CD4-positive, alpha-beta T cell (primary cell): ENCODE measurements at regions of chr6 and their contacts with region 1.

Region 1: GRCh38 chr6:159789377-159790148 is at the start of gene TCP1:
- DNase-seq: peak; percentile 95 to 100 (median 99)
- ATAC-seq: peak; percentile 83
- H3K4me3 ChIP-seq: peak within 1 kb of the TSS; percentile 84
- H3K4me3 Mint-ChIP-seq: peak within 1 kb of the TSS; percentile 99
- H3K27ac ChIP-seq: peak within 1 kb of the TSS; percentile 88 to 97
- H3K27ac Mint-ChIP-seq: peak within 1 kb of the TSS; percentile 95
- H3K4me1 ChIP-seq: peaks cover 37% of the 10 kb centered on the region
- H3K4me1 Mint-ChIP-seq: peaks cover 73% of the 10 kb centered on the region
- H3K27me3 ChIP-seq: no peaks in the 10 kb centered on the region
- H3K27me3 Mint-ChIP-seq: no peaks in the 10 kb centered on the region
- CTCF ChIP-seq: no peak
- total RNA-seq, gene TCP1: 212 to 216 TPM

Region 2: GRCh38 chr6:159726918-159727716 is 62.4 kb before region 1 on chr6 and contains the start of gene WTAP:
- CTCF ChIA-PET with region 1: interaction called, 4 read pairs
- POLR2A ChIA-PET with region 1: interaction called, 176 read pairs
- intact Hi-C with region 1: loop called (anchors 1 kb)
- DNase-seq: peak; percentile 94 to 99 (median 96)
- ATAC-seq: peak; percentile 86
- H3K4me3 ChIP-seq: peak within 1 kb of the TSS; percentile 82
- H3K4me3 Mint-ChIP-seq: peak within 1 kb of the TSS; percentile 99
- H3K27ac ChIP-seq: peak within 1 kb of the TSS; percentile 95 to 98
- H3K27ac Mint-ChIP-seq: peak within 1 kb of the TSS; percentile 100
- H3K4me1 ChIP-seq: peaks cover 25% of the 10 kb centered on the region
- H3K4me1 Mint-ChIP-seq: peaks cover 80% of the 10 kb centered on the region
- H3K27me3 ChIP-seq: no peaks in the 10 kb centered on the region
- H3K27me3 Mint-ChIP-seq: peaks cover 9% of the 10 kb centered on the region
- CTCF ChIP-seq: no peak
- total RNA-seq, gene WTAP: 211 to 227 TPM

Region 3: GRCh38 chr6:159819932-159820640 is 30.5 kb after region 1 on chr6:
- CTCF ChIA-PET with region 1: no interaction called
- POLR2A ChIA-PET with region 1: interaction called, 37 read pairs
- intact Hi-C with region 1: no loop called
- DNase-seq: peak in 12 of 14 experiments; percentile 5 to 64 (median 36)
- ATAC-seq: peak; percentile 85
- H3K4me3 ChIP-seq: peak overlapping the region; percentile 47
- H3K4me3 Mint-ChIP-seq: peak overlapping the region; percentile 83
- H3K27ac ChIP-seq: peak overlapping the region; percentile 33 to 53
- H3K27ac Mint-ChIP-seq: peak overlapping the region; percentile 81
- H3K4me1 ChIP-seq: peaks cover 24% of the 10 kb centered on the region
- H3K4me1 Mint-ChIP-seq: peaks cover 30% of the 10 kb centered on the region
- H3K27me3 ChIP-seq: no peaks in the 10 kb centered on the region
- H3K27me3 Mint-ChIP-seq: no peaks in the 10 kb centered on the region
- CTCF ChIP-seq: no peak

Region 4: DNA sequence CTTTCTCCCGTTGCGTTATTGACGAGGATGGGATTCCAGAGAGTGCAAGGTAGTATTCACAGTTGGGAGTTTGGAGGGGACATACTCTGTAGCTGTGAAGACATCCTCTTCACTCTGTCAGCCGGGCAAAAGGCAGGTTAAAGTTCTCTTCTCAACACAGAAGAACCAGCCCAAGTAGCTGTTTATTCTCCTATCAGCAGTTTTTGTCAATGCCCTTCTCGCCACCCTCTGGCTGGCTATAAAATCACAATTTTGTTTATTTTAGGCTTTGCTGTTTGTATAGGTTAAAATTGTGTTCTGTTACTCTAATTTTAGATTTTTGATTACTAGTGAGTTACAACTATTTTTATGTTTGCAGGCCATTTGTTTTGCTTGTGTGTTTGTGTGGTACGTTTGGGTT is 63.3 kb after region 1 on chr6:
- CTCF ChIA-PET with region 1: no interaction called
- POLR2A ChIA-PET with region 1: interaction called, 18 read pairs
- intact Hi-C with region 1: loop called (anchors 5 kb)
- DNase-seq: peak in 7 of 14 experiments; percentile 4 to 53 (median 37)
- ATAC-seq: peak; percentile 67
- H3K4me3 ChIP-seq: no peak overlapping the region
- H3K4me3 Mint-ChIP-seq: no peak overlapping the region
- H3K27ac ChIP-seq: no peak overlapping the region
- H3K27ac Mint-ChIP-seq: no peak overlapping the region
- H3K4me1 ChIP-seq: no peaks in the 10 kb centered on the region
- H3K4me1 Mint-ChIP-seq: peaks cover 4% of the 10 kb centered on the region
- H3K27me3 ChIP-seq: no peaks in the 10 kb centered on the region
- H3K27me3 Mint-ChIP-seq: no peaks in the 10 kb centered on the region
- CTCF ChIP-seq: peak; percentile 43

Region 5: GRCh38 chr6:159968440-159969203 is 179.1 kb after region 1 on chr6 and contains the start of gene IGF2R:
- CTCF ChIA-PET with region 1: no interaction called
- POLR2A ChIA-PET with region 1: interaction called, 10 read pairs
- intact Hi-C with region 1: loop called in 1 of 2 experiments (anchors 2 kb)
- DNase-seq: peak; percentile 86 to 97 (median 94)
- ATAC-seq: peak; percentile 89
- H3K4me3 ChIP-seq: peak within 1 kb of the TSS; percentile 76
- H3K4me3 Mint-ChIP-seq: peak within 1 kb of the TSS; percentile 98
- H3K27ac ChIP-seq: peak within 1 kb of the TSS; percentile 31 to 42
- H3K27ac Mint-ChIP-seq: peak within 1 kb of the TSS; percentile 91
- H3K4me1 ChIP-seq: peaks cover 41% of the 10 kb centered on the region
- H3K4me1 Mint-ChIP-seq: peaks cover 45% of the 10 kb centered on the region
- H3K27me3 ChIP-seq: no peaks in the 10 kb centered on the region
- H3K27me3 Mint-ChIP-seq: no peaks in the 10 kb centered on the region
- CTCF ChIP-seq: no peak
- total RNA-seq, gene IGF2R: 43.8 to 46.7 TPM

Region 6: GRCh38 chr6:161152907-161153662 is 1363.5 kb after region 1 on chr6:
- CTCF ChIA-PET with region 1: no interaction called
- POLR2A ChIA-PET with region 1: no interaction called
- intact Hi-C with region 1: no loop called
- DNase-seq: peak in 1 of 14 experiments; percentile 18
- ATAC-seq: no peak
- H3K4me3 ChIP-seq: no peak overlapping the region
- H3K4me3 Mint-ChIP-seq: no peak overlapping the region
- H3K27ac ChIP-seq: no peak overlapping the region
- H3K27ac Mint-ChIP-seq: no peak overlapping the region
- H3K4me1 ChIP-seq: no peaks in the 10 kb centered on the region
- H3K4me1 Mint-ChIP-seq: no peaks in the 10 kb centered on the region
- H3K27me3 ChIP-seq: no peaks in the 10 kb centered on the region
- H3K27me3 Mint-ChIP-seq: no peaks in the 10 kb centered on the region
- CTCF ChIP-seq: no peak